CD4-positive, alpha-beta memory T cell (primary cell): ENCODE measurements at regions of chr17 and their contacts with region 1.

Region 1: DNA sequence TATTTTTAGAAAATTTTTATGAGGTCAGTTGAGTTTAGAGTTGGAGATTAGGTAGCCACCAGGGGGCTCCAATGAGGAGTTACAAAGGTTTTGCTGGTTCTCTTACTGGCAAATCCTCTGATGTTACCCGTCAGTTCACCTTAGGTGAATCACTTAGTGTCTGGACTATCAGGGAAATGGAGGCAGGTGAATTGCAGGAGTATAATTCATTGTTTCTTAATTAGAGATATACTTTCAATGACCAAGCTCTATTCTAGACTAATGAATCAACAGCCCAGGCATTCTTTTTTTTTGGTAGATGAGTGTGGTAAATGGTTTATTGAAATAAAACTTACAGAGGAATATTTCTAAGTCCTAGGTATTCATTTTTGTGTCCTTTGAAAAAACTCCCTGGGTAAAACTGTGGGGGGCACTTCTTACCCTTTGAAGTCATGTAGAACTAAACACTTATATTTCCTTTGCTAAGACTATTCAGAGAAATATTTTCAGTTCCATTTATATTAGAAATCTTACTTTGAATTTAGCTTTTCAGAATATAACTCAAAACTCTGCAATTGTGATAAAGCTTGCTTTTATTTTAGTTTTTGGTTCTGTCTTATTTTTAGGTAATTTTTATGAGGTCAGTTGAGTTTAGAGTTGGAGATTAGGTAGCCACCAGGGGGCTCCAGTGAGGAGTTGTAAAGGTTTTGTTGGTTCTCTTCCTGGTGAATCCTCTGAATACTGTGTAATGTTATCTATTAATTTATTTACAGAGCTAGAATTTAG is 17.7 kb downstream of the PSMD11 start:
- DNase-seq: peak; percentile 62 to 78 (median 65)
- H3K4me3 ChIP-seq: no peak overlapping the region
- H3K4me3 Mint-ChIP-seq: peak overlapping the region in 2 of 8 donors; percentile 20 to 44
- H3K27ac ChIP-seq: no peak overlapping the region
- H3K27ac Mint-ChIP-seq: peak overlapping the region in 6 of 7 donors; percentile 10 to 72 (median 48)
- H3K4me1 ChIP-seq: peaks cover 20% of the 10 kb centered on the region
- H3K4me1 Mint-ChIP-seq: peaks cover 16 to 29% (median 23%) of the 10 kb centered on the region in 4 donors
- H3K27me3 ChIP-seq: no peaks in the 10 kb centered on the region
- H3K27me3 Mint-ChIP-seq: no peaks in the 10 kb centered on the region

Region 2: GRCh38 chr17:32311028-32311536 is 151.0 kb before region 1 on chr17:
- CTCF ChIA-PET with region 1: no interaction called
- POLR2A ChIA-PET with region 1: no interaction called
- intact Hi-C with region 1: no loop called
- DNase-seq: no peak
- H3K4me3 ChIP-seq: no peak overlapping the region
- H3K4me3 Mint-ChIP-seq: no peak overlapping the region
- H3K27ac ChIP-seq: no peak overlapping the region
- H3K27ac Mint-ChIP-seq: no peak overlapping the region
- H3K4me1 ChIP-seq: no peaks in the 10 kb centered on the region
- H3K4me1 Mint-ChIP-seq: no peaks in the 10 kb centered on the region
- H3K27me3 ChIP-seq: no peaks in the 10 kb centered on the region
- H3K27me3 Mint-ChIP-seq: peaks cover 2 to 4% of the 10 kb centered on the region in 2 donors

Region 3: DNA sequence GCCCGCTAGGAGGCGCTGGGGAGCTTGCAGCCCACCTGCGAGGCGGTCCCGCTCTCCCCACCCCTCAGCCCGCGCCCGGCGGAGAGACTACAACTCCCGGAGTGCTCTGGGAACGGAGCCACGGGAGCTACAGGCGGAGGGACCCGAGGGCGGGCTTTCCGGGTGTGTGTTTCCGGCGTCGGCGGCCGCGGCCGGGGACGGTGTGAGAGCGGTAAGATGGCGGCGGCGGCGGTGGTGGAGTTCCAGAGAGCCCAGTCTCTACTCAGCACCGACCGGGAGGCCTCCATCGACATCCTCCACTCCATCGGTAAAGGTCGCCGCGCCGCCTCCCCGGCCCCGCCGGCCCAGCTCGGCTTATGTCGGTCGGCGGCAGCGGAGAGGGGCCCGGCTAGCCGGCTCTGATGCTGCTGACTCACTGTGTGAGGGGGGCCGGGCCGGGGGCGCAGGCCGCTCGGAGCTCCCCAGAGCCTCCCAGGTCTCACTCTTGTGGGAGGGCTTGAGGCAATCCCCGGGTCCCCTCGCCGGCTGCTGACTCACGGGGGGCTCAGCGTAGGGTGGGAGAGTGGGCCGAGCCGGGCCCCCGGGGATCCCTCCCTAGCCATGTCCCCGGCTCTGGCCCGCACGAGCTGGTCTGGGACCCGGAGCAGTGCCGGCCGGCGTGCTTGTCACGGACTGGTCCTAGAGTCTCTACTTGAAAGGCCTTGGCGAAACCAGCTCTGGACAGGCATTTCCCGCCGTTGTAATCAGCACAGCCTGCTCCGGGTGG is 17.5 kb before region 1 on chr17 and contains the start of gene PSMD11:
- CTCF ChIA-PET with region 1: interaction called, 121 read pairs
- POLR2A ChIA-PET with region 1: interaction called, 8 read pairs
- intact Hi-C with region 1: loop called (anchors 1 kb)
- DNase-seq: peak; percentile 98 to 99 (median 99)
- H3K4me3 ChIP-seq: peak within 1 kb of the TSS; percentile 66 to 71
- H3K4me3 Mint-ChIP-seq: peak within 1 kb of the TSS; percentile 85 to 96 (median 90)
- H3K27ac ChIP-seq: peak within 1 kb of the TSS; percentile 79
- H3K27ac Mint-ChIP-seq: peak within 1 kb of the TSS; percentile 33 to 96 (median 90)
- H3K4me1 ChIP-seq: peaks cover 27% of the 10 kb centered on the region
- H3K4me1 Mint-ChIP-seq: peaks cover 21 to 43% (median 31%) of the 10 kb centered on the region in 4 donors
- H3K27me3 ChIP-seq: no peaks in the 10 kb centered on the region
- H3K27me3 Mint-ChIP-seq: no peaks in the 10 kb centered on the region
- total RNA-seq, gene PSMD11: 58.0 to 68.2 TPM

Region 4: DNA sequence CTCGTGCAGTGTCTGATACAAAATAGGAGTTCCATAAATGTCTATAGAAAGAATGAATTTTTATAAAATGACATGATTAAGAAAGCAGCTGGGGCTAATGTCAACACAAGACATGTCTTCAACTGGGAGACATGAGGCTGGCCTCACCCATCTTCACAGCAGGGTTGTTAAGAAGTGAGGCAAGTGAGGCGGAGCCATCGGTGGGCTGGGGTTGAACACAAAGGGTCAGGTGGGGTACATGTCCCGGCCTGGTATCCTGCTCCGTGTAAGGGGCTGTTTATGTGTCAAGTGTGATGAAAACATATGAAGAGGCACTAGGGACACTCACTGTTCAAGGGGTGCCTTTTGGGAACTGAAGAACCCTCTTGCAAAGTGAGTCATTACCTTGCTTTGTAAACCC is 46.9 kb after region 1 on chr17:
- CTCF ChIA-PET with region 1: interaction called, 11 read pairs
- POLR2A ChIA-PET with region 1: no interaction called
- intact Hi-C with region 1: no loop called
- DNase-seq: no peak
- H3K4me3 ChIP-seq: no peak overlapping the region
- H3K4me3 Mint-ChIP-seq: peak overlapping the region in 2 of 8 donors; percentile 15 to 17
- H3K27ac ChIP-seq: no peak overlapping the region
- H3K27ac Mint-ChIP-seq: peak overlapping the region in 5 of 7 donors; percentile 36 to 70 (median 42)
- H3K4me1 ChIP-seq: peaks cover 50% of the 10 kb centered on the region
- H3K4me1 Mint-ChIP-seq: peaks cover 36 to 56% (median 45%) of the 10 kb centered on the region in 4 donors
- H3K27me3 ChIP-seq: no peaks in the 10 kb centered on the region
- H3K27me3 Mint-ChIP-seq: no peaks in the 10 kb centered on the region

Region 5: DNA sequence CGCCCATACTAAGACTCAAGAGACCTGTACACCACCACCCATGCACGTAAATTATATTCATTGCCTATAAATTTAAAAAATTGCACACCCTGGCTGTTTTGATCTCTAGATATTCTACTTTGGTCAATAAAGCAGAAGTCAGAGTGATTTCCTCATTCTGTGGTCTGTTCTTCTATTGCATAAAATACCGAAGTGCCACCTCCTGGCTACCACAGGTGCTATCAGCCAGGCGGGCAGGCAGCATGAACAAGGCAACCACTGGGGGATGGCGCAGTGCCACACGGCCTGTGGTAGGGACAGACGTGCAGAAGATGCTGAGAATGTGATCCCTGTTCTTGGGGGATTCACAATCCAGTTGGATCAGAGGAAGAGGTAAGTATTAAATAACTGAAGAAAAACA is 147.1 kb after region 1 on chr17:
- CTCF ChIA-PET with region 1: interaction called, 30 read pairs
- POLR2A ChIA-PET with region 1: no interaction called
- intact Hi-C with region 1: loop called (anchors 1 kb)
- DNase-seq: peak; percentile 67 to 74 (median 73)
- H3K4me3 ChIP-seq: no peak overlapping the region
- H3K4me3 Mint-ChIP-seq: no peak overlapping the region
- H3K27ac ChIP-seq: no peak overlapping the region
- H3K27ac Mint-ChIP-seq: peak overlapping the region in 3 of 7 donors; percentile 3 to 56 (median 11)
- H3K4me1 ChIP-seq: no peaks in the 10 kb centered on the region
- H3K4me1 Mint-ChIP-seq: peaks cover 5 to 9% (median 5%) of the 10 kb centered on the region in 4 donors
- H3K27me3 ChIP-seq: no peaks in the 10 kb centered on the region
- H3K27me3 Mint-ChIP-seq: no peaks in the 10 kb centered on the region

Region 6: GRCh38 chr17:32755045-32755805 is 293.2 kb after region 1 on chr17:
- CTCF ChIA-PET with region 1: interaction called, 30 read pairs
- POLR2A ChIA-PET with region 1: no interaction called
- intact Hi-C with region 1: no loop called
- DNase-seq: peak in 4 of 5 donors; percentile 51 to 57 (median 52)
- H3K4me3 ChIP-seq: no peak overlapping the region
- H3K4me3 Mint-ChIP-seq: no peak overlapping the region
- H3K27ac ChIP-seq: no peak overlapping the region
- H3K27ac Mint-ChIP-seq: peak overlapping the region in 1 of 7 donors; percentile 30
- H3K4me1 ChIP-seq: peaks cover 13% of the 10 kb centered on the region
- H3K4me1 Mint-ChIP-seq: peaks cover 9 to 13% (median 13%) of the 10 kb centered on the region in 4 donors
- H3K27me3 ChIP-seq: no peaks in the 10 kb centered on the region
- H3K27me3 Mint-ChIP-seq: no peaks in the 10 kb centered on the region